Mammary epithelial cell (primary cell): ENCODE measurements at regions of chr19 and their contacts with region 1.

Region 1: DNA sequence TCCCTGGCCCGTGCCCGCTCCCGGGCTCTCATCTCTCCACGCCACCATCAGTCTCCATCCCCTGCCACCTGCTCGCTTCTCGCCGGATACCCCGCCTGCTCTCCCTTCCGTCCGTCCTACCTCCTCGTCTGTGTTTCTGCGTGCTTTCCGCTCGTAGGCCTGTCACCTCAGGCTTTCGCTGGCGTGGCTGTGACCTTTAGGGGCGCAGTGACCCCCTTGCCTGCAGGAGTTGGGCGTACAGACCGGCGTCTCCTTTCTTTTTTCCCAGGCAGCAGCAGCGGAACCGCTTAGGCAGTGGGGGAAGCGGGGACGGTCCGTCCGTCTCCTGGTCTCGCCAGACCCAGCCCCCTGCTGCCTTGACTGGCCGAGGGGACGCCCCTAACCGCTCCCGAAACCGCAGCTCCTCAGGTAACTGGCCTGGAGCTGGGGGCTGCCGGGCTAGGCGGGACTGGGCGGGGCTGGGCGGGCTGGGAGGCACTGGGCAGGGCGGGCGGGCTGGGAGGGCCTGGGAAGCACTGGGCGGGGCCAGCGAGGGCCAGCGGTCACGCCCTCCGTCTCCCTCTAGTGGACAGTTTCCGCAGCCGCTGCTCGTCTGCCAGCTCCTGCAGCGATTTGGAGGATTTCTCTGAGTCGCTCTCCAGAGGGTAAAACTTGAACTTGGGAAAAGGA is 6.3 kb downstream of the PGLYRP1 start:
- DNase-seq: peak; percentile 76
- H3K4me3 ChIP-seq: peak overlapping the region; percentile 31 to 59 (median 56)
- H3K27ac ChIP-seq: no peak overlapping the region
- H3K4me1 ChIP-seq: peaks cover 37% of the 10 kb centered on the region
- H3K27me3 ChIP-seq: no peaks in the 10 kb centered on the region
- CTCF ChIP-seq: peak; percentile 68 to 79

Region 2: GRCh38 chr19:45817010-45817724 is 199.4 kb before region 1 on chr19:
- CTCF ChIA-PET with region 1: interaction called, 3 read pairs
- dilution Hi-C with region 1: no loop called
- in situ Hi-C with region 1: no loop called
- intact Hi-C with region 1: loop called (anchors 1 kb)
- DNase-seq: peak; percentile 75
- H3K4me3 ChIP-seq: no peak overlapping the region
- H3K27ac ChIP-seq: no peak overlapping the region
- H3K4me1 ChIP-seq: peaks cover 14% of the 10 kb centered on the region
- H3K27me3 ChIP-seq: no peaks in the 10 kb centered on the region
- CTCF ChIP-seq: peak; percentile 96 to 98

Region 3: GRCh38 chr19:45913874-45914830 is 102.4 kb before region 1 on chr19 and contains the start of gene NANOS2:
- CTCF ChIA-PET with region 1: interaction called, 13 read pairs
- dilution Hi-C with region 1: no loop called
- in situ Hi-C with region 1: no loop called
- intact Hi-C with region 1: no loop called
- DNase-seq: no peak
- H3K4me3 ChIP-seq: no peak within 1 kb of the TSS
- H3K27ac ChIP-seq: no peak within 1 kb of the TSS
- H3K4me1 ChIP-seq: no peaks in the 10 kb centered on the region
- H3K27me3 ChIP-seq: no peaks in the 10 kb centered on the region
- CTCF ChIP-seq: peak in 1 of 2 donors; percentile 12
- total RNA-seq, gene NANOS2: not detected

Region 4: GRCh38 chr19:45973578-45974338 is 42.8 kb before region 1 on chr19 and contains the start of gene NOVA2:
- CTCF ChIA-PET with region 1: no interaction called
- dilution Hi-C with region 1: no loop called
- in situ Hi-C with region 1: no loop called
- intact Hi-C with region 1: no loop called
- DNase-seq: peak; percentile 47
- H3K4me3 ChIP-seq: no peak within 1 kb of the TSS
- H3K27ac ChIP-seq: no peak within 1 kb of the TSS
- H3K4me1 ChIP-seq: peaks cover 3% of the 10 kb centered on the region
- H3K27me3 ChIP-seq: peaks cover 2% of the 10 kb centered on the region
- CTCF ChIP-seq: no peak
- total RNA-seq, gene NOVA2: not detected